ENCODE measurements at regions of chr19 and their contacts with region 1.

Region 1: GRCh38 chr19:38514812-38515633 is 81.5 kb downstream of the RYR1 start:
- H3K4me3 ChIP-seq: no peak overlapping the region
- H3K27ac ChIP-seq: no peak overlapping the region
- H3K4me1 ChIP-seq: no peaks in the 10 kb centered on the region
- CTCF ChIP-seq: peak; percentile 97

Region 2: DNA sequence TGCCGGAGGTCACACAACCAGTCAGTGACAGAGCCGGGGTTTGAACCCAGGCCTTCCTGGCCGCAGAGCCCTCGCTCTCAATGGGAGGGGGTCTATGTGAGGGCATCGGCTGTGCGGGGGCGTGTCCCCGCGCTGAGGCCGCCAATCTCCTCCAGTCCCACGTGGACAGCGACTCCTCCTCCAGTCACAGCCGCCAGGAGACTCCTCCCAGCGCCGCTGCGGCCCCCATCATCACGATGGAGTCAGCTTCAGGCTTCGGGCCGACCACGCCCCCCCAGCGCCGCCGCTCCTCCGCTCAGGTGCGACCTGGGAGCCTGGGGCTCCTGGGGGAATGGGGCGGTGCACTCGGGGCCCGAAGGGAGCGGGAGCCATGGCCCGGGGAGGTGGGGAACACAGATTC is 120.5 kb before region 1 on chr19:
- CTCF ChIA-PET with region 1: no interaction called
- POLR2A ChIA-PET with region 1: no interaction called
- H3K4me3 ChIP-seq: no peak overlapping the region
- H3K27ac ChIP-seq: no peak overlapping the region
- H3K4me1 ChIP-seq: no peaks in the 10 kb centered on the region; the same call in none of the 2 replicates
- CTCF ChIP-seq: no peak

Region 3: DNA sequence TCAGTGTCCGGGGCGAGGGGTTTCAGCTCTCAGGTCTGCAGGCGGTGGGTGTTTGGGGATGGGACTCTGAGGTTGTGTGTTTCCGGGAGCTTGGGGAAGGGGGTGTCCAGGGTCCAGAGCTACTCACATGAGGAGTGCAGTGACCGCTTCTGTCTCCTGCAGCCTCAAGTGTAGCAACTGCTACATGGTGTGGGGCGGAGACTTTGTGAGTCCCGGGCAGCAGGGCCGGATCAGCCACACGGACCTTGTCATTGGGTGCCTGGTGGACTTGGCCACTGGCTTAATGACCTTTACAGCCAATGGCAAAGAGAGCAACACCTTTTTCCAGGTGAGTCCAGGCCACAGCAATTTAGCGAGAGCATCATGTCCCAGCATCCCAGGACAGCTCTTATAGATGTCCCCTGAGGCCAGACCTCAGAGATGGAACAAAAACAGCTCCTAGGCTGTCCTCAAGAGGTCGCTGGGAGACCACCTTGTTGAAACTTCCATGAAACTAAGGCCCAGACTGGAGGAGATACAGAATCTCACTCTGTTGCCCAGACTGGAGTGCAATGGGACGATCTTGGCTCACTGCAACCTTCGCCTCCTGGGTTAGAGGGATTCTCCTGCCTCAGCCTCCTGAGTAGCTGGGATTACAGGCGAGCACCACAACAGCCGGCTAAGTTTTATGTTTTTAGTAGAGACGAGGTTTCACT is 36.6 kb before region 1 on chr19:
- CTCF ChIA-PET with region 1: interaction called, 18 read pairs
- POLR2A ChIA-PET with region 1: no interaction called
- H3K4me3 ChIP-seq: no peak overlapping the region
- H3K27ac ChIP-seq: no peak overlapping the region
- H3K4me1 ChIP-seq: no peaks in the 10 kb centered on the region
- CTCF ChIP-seq: peak; percentile 77

Region 4: GRCh38 chr19:38538793-38539528 is 23.9 kb after region 1 on chr19:
- CTCF ChIA-PET with region 1: interaction called, 40 read pairs
- POLR2A ChIA-PET with region 1: interaction called, 3 read pairs
- H3K4me3 ChIP-seq: no peak overlapping the region
- H3K27ac ChIP-seq: no peak overlapping the region
- H3K4me1 ChIP-seq: 0 out of 2 replicates have a peak, but pooled peaks cover 5% of the 10 kb centered on the region
- CTCF ChIP-seq: no peak

Region 5: GRCh38 chr19:38544034-38544958 is 29.3 kb after region 1 on chr19:
- CTCF ChIA-PET with region 1: interaction called, 25 read pairs
- POLR2A ChIA-PET with region 1: no interaction called
- H3K4me3 ChIP-seq: peak overlapping the region; percentile 37
- H3K27ac ChIP-seq: peak overlapping the region; percentile 19
- H3K4me1 ChIP-seq: peaks cover 11% of the 10 kb centered on the region
- CTCF ChIP-seq: peak; percentile 90

Region 6: GRCh38 chr19:38596057-38596981 is 81.3 kb after region 1 on chr19:
- CTCF ChIA-PET with region 1: interaction called, 11 read pairs
- POLR2A ChIA-PET with region 1: no interaction called
- H3K4me3 ChIP-seq: peak overlapping the region; percentile 42
- H3K27ac ChIP-seq: peak overlapping the region; percentile 49; the same call in 1 of the 2 replicates
- H3K4me1 ChIP-seq: peaks cover 12% of the 10 kb centered on the region
- CTCF ChIP-seq: peak; percentile 50; the same call in 1 of the 2 replicates

Region 7: DNA sequence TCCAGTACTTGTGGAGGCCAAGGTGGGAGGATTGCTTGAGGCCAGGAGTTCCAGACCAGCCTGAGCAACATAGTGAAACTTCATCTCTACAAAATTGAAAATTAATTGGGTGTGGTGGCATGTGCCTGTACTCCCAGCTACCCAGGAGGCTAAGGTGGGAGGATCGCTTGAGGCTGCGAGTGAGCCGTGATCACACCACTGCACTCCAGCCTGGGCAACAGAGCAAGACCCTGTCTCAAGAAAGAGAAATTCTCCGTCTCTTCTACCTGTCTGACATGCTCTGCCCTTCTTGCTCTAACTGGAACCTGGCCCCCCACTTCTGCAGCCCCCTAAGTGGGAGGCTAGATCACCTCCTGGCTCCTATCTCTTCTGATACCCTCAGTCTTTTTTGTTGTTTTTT is 111.4 kb after region 1 on chr19:
- CTCF ChIA-PET with region 1: interaction called, 10 read pairs
- POLR2A ChIA-PET with region 1: interaction called, 5 read pairs
- H3K4me3 ChIP-seq: no peak overlapping the region
- H3K27ac ChIP-seq: no peak overlapping the region
- H3K4me1 ChIP-seq: no peaks in the 10 kb centered on the region
- CTCF ChIP-seq: no peak

Region 8: GRCh38 chr19:38788478-38789243 is 273.6 kb after region 1 on chr19 and contains the start of gene LGALS7B:
- CTCF ChIA-PET with region 1: no interaction called
- POLR2A ChIA-PET with region 1: no interaction called
- H3K4me3 ChIP-seq: no peak within 1 kb of the TSS
- H3K27ac ChIP-seq: no peak within 1 kb of the TSS
- H3K4me1 ChIP-seq: 0 out of 2 replicates have a peak, but pooled peaks cover 2% of the 10 kb centered on the region
- CTCF ChIP-seq: no peak